CD8-positive, alpha-beta T cell (primary cell): ENCODE measurements at regions of chr11 and their contacts with region 1.

Region 1: DNA sequence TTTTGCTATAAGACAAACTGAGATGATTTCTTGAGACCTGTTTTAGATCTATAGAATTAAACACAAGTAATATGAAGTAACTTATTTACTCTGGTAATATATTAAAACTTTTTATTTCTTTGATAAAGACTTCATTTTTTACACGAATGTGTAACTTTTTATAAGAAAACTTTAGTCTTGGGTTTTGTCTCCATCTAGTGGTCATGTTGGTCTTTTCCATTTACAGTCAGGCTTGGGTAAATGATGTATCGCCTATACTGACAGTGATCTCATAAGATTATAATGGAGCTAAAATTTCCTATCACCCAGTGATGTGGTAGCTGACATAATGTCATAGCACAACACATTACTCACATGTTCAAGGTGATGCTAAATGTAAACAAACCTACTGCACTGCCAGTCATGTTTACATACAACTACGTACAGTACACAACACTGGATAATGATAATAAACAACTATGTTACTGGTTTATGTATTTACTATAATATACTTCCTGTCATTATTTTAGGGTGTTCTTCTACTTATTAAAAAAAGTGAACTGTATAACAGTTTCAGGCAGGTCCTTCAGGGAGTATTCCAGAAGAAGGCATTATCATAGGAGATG is 7.5 kb upstream of the C11orf97 start:
- DNase-seq: peak in 2 of 9 experiments; percentile 67 to 72
- ATAC-seq: peak; percentile 59
- H3K4me3 ChIP-seq: no peak overlapping the region
- H3K4me3 Mint-ChIP-seq: no peak overlapping the region
- H3K27ac ChIP-seq: no peak overlapping the region
- H3K27ac Mint-ChIP-seq: no peak overlapping the region
- H3K4me1 ChIP-seq: no peaks in the 10 kb centered on the region
- H3K4me1 Mint-ChIP-seq: peaks cover 1% of the 10 kb centered on the region
- H3K27me3 ChIP-seq: no peaks in the 10 kb centered on the region
- H3K27me3 Mint-ChIP-seq: peaks cover 3% of the 10 kb centered on the region
- CTCF ChIP-seq: peak; percentile 87

Region 2: DNA sequence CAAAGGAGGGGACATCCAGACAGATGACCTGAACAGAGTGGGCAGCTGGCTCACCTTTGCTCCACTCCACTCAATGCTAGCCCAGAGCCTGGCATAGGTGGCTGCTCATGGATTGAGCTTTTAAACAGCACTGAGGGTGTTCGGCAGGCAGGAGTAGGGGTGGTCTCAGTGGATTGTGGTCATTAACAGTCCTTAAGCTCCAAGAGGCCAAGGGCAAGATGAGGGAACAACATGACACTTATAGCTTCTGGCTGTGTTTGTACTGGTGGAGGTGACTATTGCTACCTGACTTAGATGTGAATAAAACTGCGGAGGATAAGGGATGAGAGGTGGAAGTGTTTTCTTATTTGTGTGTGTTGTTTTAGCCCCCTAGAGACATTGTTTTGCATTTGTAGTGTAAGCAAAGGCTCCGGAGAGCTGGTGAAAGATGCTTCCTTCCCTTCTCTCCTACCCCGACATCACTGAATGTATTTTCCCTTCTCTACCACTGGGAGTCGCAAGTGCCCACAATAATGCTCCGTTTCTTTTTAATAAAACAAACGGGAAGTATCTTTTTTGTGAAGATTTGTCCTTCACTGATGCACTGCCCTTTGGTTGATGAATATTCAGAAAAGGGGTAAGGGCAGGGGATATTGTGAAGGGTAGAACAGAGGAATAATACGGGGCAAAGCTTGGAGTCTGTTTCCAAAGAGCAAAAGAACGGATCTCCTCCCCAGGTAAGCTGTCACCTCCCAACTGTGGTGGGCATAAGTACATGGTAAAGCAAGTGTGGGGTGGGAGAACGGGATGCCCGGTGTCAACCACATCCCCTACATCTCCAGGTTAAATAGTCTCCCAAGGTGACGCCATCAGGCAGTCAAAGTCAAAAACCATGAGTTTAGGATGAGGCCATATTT is 1562.9 kb before region 1 on chr11:
- CTCF ChIA-PET with region 1: no interaction called
- POLR2A ChIA-PET with region 1: no interaction called
- intact Hi-C with region 1: loop called in 1 of 2 experiments (anchors 5 kb)
- DNase-seq: peak in 2 of 9 experiments; percentile 10 to 22
- ATAC-seq: no peak
- H3K4me3 ChIP-seq: no peak overlapping the region
- H3K4me3 Mint-ChIP-seq: no peak overlapping the region
- H3K27ac ChIP-seq: no peak overlapping the region
- H3K27ac Mint-ChIP-seq: no peak overlapping the region
- H3K4me1 ChIP-seq: no peaks in the 10 kb centered on the region
- H3K4me1 Mint-ChIP-seq: no peaks in the 10 kb centered on the region
- H3K27me3 ChIP-seq: no peaks in the 10 kb centered on the region
- H3K27me3 Mint-ChIP-seq: peaks cover 5% of the 10 kb centered on the region
- CTCF ChIP-seq: peak; percentile 30

Region 3: DNA sequence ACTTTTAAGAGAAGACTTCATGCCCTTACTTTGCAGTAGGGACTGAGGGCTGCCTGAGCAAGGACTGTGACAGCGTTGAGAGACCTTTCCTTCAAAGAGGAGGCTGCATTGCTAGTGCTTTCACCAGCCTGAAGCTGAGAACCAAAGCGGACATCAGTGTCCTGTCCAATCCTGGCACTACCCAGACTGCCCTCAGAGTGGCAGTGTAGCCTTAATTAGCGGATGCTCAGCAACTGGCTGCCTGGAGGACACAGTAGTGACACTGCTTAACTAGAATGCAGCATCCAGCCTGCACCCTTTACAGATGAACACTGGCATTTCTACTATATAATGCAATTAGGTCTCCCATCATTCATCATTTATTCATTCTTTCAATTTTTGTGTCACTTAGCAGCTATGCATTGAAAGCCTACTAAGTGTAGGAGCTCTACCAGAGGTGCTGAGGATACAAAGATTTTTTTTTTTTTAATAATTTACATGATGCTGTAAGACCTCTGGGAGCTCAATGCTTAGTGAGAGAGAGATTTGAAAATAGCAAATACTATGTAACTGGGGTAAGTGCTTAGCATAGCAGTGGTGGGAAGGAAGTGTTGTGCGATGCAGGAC is 1270.1 kb before region 1 on chr11:
- CTCF ChIA-PET with region 1: interaction called, 3 read pairs
- POLR2A ChIA-PET with region 1: no interaction called
- intact Hi-C with region 1: loop called (anchors 1 to 2 kb)
- DNase-seq: peak; percentile 22 to 72 (median 59)
- ATAC-seq: peak; percentile 89
- H3K4me3 ChIP-seq: no peak overlapping the region
- H3K4me3 Mint-ChIP-seq: no peak overlapping the region
- H3K27ac ChIP-seq: no peak overlapping the region
- H3K27ac Mint-ChIP-seq: no peak overlapping the region
- H3K4me1 ChIP-seq: no peaks in the 10 kb centered on the region
- H3K4me1 Mint-ChIP-seq: no peaks in the 10 kb centered on the region
- H3K27me3 ChIP-seq: no peaks in the 10 kb centered on the region
- H3K27me3 Mint-ChIP-seq: peaks cover 20% of the 10 kb centered on the region
- CTCF ChIP-seq: peak; percentile 66

Region 4: DNA sequence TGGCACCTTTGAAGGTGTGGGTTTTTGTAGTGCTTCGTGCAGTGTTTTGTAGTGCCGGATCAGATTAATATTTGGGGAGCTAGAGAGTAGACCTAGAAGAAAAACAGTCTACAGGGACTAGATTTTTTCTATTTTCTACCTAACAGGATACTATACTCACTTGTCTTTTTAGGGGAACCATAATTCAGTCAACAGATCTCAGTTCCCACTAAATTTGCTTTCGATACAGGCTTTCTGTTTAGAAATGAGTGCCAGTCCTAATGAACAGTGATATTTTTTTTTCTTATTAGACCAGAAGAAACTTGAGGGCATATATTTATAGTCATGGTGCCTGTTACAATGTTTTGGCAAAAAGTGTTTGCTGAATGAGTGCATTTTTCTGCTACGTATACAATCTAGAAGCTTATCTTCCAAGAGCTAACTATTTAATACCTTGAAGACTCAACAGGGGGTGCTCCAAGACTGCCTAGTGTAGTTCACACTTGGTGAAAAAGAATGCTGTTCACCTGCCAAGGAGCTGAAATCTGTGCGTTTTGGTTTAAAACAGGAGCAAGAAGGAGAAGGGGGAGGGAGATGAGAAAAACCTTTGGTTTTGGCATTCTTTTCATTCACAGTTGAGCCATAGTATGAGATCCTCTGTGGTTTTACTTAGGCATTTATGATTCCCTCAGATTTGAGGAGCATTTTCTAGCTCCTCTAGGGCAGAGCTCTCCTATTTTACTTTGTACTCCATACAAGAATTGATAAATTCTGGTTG is 609.5 kb before region 1 on chr11:
- CTCF ChIA-PET with region 1: interaction called, 21 read pairs
- POLR2A ChIA-PET with region 1: no interaction called
- intact Hi-C with region 1: loop called in 1 of 2 experiments (anchors 1 kb)
- DNase-seq: peak in 3 of 9 experiments; percentile 10 to 52 (median 44)
- ATAC-seq: no peak
- H3K4me3 ChIP-seq: no peak overlapping the region
- H3K4me3 Mint-ChIP-seq: no peak overlapping the region
- H3K27ac ChIP-seq: no peak overlapping the region
- H3K27ac Mint-ChIP-seq: no peak overlapping the region
- H3K4me1 ChIP-seq: no peaks in the 10 kb centered on the region
- H3K4me1 Mint-ChIP-seq: no peaks in the 10 kb centered on the region
- H3K27me3 ChIP-seq: peaks cover 0 to 2% of the 10 kb centered on the region in 2 experiments
- H3K27me3 Mint-ChIP-seq: peaks cover 41% of the 10 kb centered on the region
- CTCF ChIP-seq: peak; percentile 30

Region 5: DNA sequence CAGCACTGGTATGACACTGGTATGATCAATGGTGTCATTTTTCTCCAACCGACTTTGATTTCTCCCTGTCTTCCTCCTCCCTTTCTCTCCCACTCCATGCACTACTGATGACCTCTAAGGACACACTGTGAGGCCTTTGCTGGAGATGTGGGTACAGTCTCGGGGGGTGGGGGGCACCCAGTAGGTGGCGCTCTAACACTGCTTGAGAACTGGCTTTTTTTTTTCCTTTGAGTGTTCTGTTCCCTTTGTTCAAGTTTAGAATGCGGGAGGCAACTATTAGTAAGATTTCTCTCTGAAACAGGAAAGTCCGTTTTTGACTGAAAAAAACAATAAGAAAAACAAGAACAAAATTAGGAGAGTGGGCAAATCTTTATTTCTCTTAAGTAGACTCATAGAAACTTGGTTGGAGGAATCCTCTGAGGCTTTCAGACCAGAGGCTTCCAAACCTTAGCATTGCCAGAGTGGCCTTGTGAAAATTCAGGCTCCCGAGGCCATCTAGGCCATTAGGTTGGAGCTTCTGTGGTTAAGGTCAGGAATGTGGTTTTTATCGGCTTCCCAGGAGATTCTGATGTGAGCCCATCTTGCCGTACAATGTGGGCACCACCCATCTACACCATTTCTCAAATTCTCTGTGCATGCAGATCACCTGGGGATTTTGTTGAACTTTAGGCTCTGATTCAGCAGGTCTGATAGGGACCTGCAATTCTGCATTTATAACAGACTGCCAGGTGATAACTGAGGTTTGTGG is 332.9 kb before region 1 on chr11:
- CTCF ChIA-PET with region 1: interaction called, 3 read pairs
- POLR2A ChIA-PET with region 1: no interaction called
- intact Hi-C with region 1: loop called in 1 of 2 experiments (anchors 2 kb)
- DNase-seq: peak in 6 of 9 experiments; percentile 23 to 43 (median 32)
- ATAC-seq: no peak
- H3K4me3 ChIP-seq: no peak overlapping the region
- H3K4me3 Mint-ChIP-seq: no peak overlapping the region
- H3K27ac ChIP-seq: no peak overlapping the region
- H3K27ac Mint-ChIP-seq: no peak overlapping the region
- H3K4me1 ChIP-seq: no peaks in the 10 kb centered on the region
- H3K4me1 Mint-ChIP-seq: peaks cover 34% of the 10 kb centered on the region
- H3K27me3 ChIP-seq: no peaks in the 10 kb centered on the region
- H3K27me3 Mint-ChIP-seq: no peaks in the 10 kb centered on the region
- CTCF ChIP-seq: peak; percentile 13

Region 6: GRCh38 chr11:94183886-94184264 is 320.9 kb before region 1 on chr11:
- CTCF ChIA-PET with region 1: no interaction called
- POLR2A ChIA-PET with region 1: no interaction called
- intact Hi-C with region 1: loop called in 1 of 2 experiments (anchors 5 kb)
- DNase-seq: peak in 3 of 9 experiments; percentile 14 to 27 (median 22)
- ATAC-seq: no peak
- H3K4me3 ChIP-seq: no peak overlapping the region
- H3K4me3 Mint-ChIP-seq: no peak overlapping the region
- H3K27ac ChIP-seq: no peak overlapping the region
- H3K27ac Mint-ChIP-seq: no peak overlapping the region
- H3K4me1 ChIP-seq: no peaks in the 10 kb centered on the region
- H3K4me1 Mint-ChIP-seq: no peaks in the 10 kb centered on the region
- H3K27me3 ChIP-seq: no peaks in the 10 kb centered on the region
- H3K27me3 Mint-ChIP-seq: no peaks in the 10 kb centered on the region
- CTCF ChIP-seq: peak; percentile 43

Region 7: GRCh38 chr11:94325681-94326080 is 179.1 kb before region 1 on chr11:
- CTCF ChIA-PET with region 1: no interaction called
- POLR2A ChIA-PET with region 1: no interaction called
- intact Hi-C with region 1: loop called in 1 of 2 experiments (anchors 1 kb)
- DNase-seq: peak; percentile 13 to 63 (median 32)
- ATAC-seq: no peak
- H3K4me3 ChIP-seq: no peak overlapping the region
- H3K4me3 Mint-ChIP-seq: no peak overlapping the region
- H3K27ac ChIP-seq: no peak overlapping the region
- H3K27ac Mint-ChIP-seq: no peak overlapping the region
- H3K4me1 ChIP-seq: no peaks in the 10 kb centered on the region
- H3K4me1 Mint-ChIP-seq: no peaks in the 10 kb centered on the region
- H3K27me3 ChIP-seq: no peaks in the 10 kb centered on the region
- H3K27me3 Mint-ChIP-seq: peaks cover 7% of the 10 kb centered on the region
- CTCF ChIP-seq: no peak